Esophagus muscularis mucosa (tissue), 4 donors: ENCODE measurements at regions of chr11 and their contacts with region 1.

Region 1: GRCh38 chr11:75394085-75394840 is 5.1 kb upstream of the RPS3 start:
- DNase-seq: no peak
- H3K4me3 ChIP-seq: no peak overlapping the region
- H3K27ac ChIP-seq: no peak overlapping the region
- H3K4me1 ChIP-seq: peaks cover 0 to 5% (median 0%) of the 10 kb centered on the region in 4 donors
- H3K27me3 ChIP-seq: no peaks in the 10 kb centered on the region
- CTCF ChIP-seq: no peak
- EP300 ChIP-seq: no peak
- POLR2A ChIP-seq: no peak

Region 2: DNA sequence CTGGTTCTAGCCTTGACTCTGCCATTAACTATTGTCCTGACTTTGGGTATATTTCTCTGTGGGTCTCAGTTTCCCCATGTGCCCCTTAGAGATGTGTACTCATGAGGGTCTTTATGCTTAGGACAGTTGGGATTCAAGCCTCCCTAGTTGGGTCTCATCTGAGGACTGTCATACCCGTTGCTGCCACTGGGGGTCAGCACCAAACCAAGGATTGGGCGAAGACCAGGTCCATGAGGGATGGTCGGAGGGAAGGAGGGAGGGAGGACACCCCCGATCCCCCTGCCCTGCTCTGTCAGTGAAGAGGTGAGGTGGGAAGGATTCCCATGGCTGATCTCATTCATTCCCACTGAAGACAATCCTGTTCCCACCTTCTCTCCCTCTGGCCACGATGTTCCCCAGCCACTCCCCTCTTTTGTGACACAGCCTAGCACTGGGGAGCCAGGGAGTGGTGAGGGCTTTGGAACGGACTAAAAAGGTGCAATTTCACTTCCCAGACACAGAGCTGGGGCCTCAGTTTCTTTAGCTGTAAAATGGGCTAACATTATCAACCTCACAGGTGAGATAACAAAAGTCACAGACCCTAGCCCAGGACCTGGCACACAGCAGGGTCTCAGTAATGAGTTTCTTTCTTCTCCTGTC is 51.2 kb after region 1 on chr11:
- intact Hi-C with region 1: loop called (anchors 5 kb)
- DNase-seq: peak; percentile 94
- H3K4me3 ChIP-seq: no peak overlapping the region
- H3K27ac ChIP-seq: no peak overlapping the region
- H3K4me1 ChIP-seq: peaks cover 0 to 13% (median 6%) of the 10 kb centered on the region in 4 donors
- H3K27me3 ChIP-seq: no peaks in the 10 kb centered on the region
- CTCF ChIP-seq: peak; percentile 94 to 97 (median 96)
- EP300 ChIP-seq: no peak
- POLR2A ChIP-seq: no peak